Naive thymus-derived CD4-positive, alpha-beta T cell (primary cell): ENCODE measurements at regions of chr16 and their contacts with region 1.

Region 1: GRCh38 chr16:67935402-67936123 is 1.1 kb downstream of the PSMB10 start:
- DNase-seq: peak; percentile 71 to 95 (median 91)
- ATAC-seq: peak; percentile 96
- H3K4me3 ChIP-seq: peak overlapping the region; percentile 99
- H3K4me3 Mint-ChIP-seq: peak overlapping the region; percentile 89 to 100 (median 100)
- H3K27ac ChIP-seq: peak overlapping the region; percentile 77
- H3K27ac Mint-ChIP-seq: peak overlapping the region; percentile 87 to 99 (median 99)
- H3K4me1 ChIP-seq: peaks cover 21 to 32% of the 10 kb centered on the region in 2 donors
- H3K4me1 Mint-ChIP-seq: peaks cover 28 to 48% (median 35%) of the 10 kb centered on the region in 7 donors
- H3K27me3 ChIP-seq: no peaks in the 10 kb centered on the region
- H3K27me3 Mint-ChIP-seq: peaks cover 0 to 3% (median 0%) of the 10 kb centered on the region in 5 donors

Region 2: GRCh38 chr16:67480833-67481560 is 454.6 kb before region 1 on chr16 and contains the start of gene ATP6V0D1:
- CTCF ChIA-PET with region 1: no interaction called
- POLR2A ChIA-PET with region 1: no interaction called
- intact Hi-C with region 1: loop called (anchors 1 kb)
- DNase-seq: peak; percentile 97 to 100 (median 99)
- ATAC-seq: peak; percentile 94
- H3K4me3 ChIP-seq: peak within 1 kb of the TSS; percentile 92
- H3K4me3 Mint-ChIP-seq: peak within 1 kb of the TSS; percentile 95 to 100 (median 99)
- H3K27ac ChIP-seq: peak within 1 kb of the TSS; percentile 99
- H3K27ac Mint-ChIP-seq: peak within 1 kb of the TSS; percentile 95 to 99 (median 98)
- H3K4me1 ChIP-seq: peaks cover 15 to 25% of the 10 kb centered on the region in 2 donors
- H3K4me1 Mint-ChIP-seq: peaks cover 20 to 60% (median 37%) of the 10 kb centered on the region in 7 donors
- H3K27me3 ChIP-seq: no peaks in the 10 kb centered on the region
- H3K27me3 Mint-ChIP-seq: no peaks in the 10 kb centered on the region
- total RNA-seq, gene ATP6V0D1: 35.8 to 104 (median 54.7) TPM

Region 3: DNA sequence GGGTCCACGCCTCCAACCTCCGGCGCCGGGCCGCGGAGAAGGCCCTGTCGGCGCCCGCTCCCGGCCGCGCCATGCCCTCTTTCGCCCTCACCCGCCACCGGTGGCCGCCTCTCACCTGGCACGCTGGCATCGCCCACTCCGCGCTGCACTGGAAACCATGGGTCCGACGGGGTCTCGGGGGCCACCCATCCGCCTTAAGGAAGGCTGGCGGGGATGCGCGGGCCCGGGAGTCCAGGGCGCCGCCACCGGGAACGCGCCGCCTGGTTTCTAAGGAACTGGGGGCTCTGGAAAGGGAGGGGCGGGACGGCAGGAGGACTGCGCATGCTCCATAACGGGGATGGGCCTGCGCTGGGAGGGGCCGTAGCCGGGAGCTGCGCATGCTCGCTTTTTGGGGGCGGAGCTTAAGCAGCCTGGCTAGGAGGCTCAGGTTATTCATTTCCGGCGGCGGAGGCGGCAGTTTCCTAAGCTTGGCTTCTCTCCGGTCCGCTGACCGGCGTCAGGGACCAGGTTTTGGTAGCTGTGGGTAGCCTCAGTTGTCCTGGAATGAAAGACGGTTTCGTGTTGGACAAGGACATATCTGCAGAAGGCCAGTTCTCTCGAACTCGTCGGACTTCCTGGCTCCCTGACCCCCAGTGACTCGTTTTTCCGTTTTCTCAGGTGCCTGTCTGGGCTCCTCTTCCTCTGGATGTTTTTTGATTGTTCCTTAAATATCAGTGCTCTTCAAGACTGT is 216.3 kb before region 1 on chr16 and contains the start of gene GFOD2:
- CTCF ChIA-PET with region 1: no interaction called
- POLR2A ChIA-PET with region 1: no interaction called
- intact Hi-C with region 1: loop called in 1 of 2 experiments (anchors 1 kb)
- DNase-seq: peak; percentile 94 to 100 (median 96)
- ATAC-seq: peak; percentile 96
- H3K4me3 ChIP-seq: peak within 1 kb of the TSS; percentile 95
- H3K4me3 Mint-ChIP-seq: peak within 1 kb of the TSS; percentile 90 to 99 (median 94)
- H3K27ac ChIP-seq: peak within 1 kb of the TSS; percentile 88
- H3K27ac Mint-ChIP-seq: peak within 1 kb of the TSS; percentile 91 to 99 (median 98)
- H3K4me1 ChIP-seq: peaks cover 15 to 16% of the 10 kb centered on the region in 2 donors
- H3K4me1 Mint-ChIP-seq: peaks cover 19 to 51% (median 39%) of the 10 kb centered on the region in 7 donors
- H3K27me3 ChIP-seq: no peaks in the 10 kb centered on the region
- H3K27me3 Mint-ChIP-seq: no peaks in the 10 kb centered on the region
- total RNA-seq, gene GFOD2: 6.3 to 13.4 (median 11.4) TPM

Region 4: DNA sequence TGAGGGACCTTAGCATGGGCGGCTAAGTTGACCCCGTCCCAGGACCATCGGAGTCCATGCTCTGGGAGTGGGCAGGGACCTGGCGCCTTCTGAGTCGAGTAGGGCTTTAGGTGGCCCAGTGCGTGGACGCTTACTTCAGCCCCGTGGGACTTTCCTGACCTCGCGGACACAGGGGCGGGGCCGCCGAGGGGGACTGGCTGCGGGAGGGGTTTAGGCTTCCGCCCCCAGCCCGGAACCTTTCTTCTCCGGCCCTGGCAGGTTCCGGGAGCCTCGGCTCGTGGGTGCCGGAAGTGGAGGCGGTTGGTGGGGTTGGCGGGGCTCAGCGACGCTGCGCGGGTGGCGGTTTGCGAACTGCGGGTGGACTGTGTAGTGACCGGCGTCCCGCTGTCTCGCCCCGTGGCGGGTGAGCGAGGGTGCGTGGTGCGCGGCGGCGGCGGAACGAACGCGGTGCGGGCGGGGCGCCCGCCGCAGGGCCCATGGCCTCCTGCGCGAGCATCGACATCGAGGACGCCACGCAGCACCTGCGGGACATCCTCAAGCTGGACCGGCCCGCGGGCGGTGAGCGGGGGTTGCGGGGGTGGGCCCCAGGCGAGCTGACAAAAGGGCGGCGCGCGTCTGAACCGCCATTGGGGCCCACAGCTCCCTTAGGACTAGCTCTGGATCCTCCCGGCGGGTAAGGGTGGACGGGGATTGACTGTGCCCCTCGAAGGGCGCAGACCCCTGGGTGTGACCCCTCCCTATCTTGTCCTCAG is 62.6 kb before region 1 on chr16 and contains the start of gene EDC4:
- CTCF ChIA-PET with region 1: no interaction called
- POLR2A ChIA-PET with region 1: interaction called, 5 read pairs
- intact Hi-C with region 1: loop called (anchors 2 kb)
- DNase-seq: peak; percentile 75 to 96 (median 83)
- ATAC-seq: peak; percentile 96
- H3K4me3 ChIP-seq: peak within 1 kb of the TSS; percentile 88
- H3K4me3 Mint-ChIP-seq: peak within 1 kb of the TSS; percentile 88 to 96 (median 94)
- H3K27ac ChIP-seq: peak within 1 kb of the TSS; percentile 91
- H3K27ac Mint-ChIP-seq: peak within 1 kb of the TSS; percentile 90 to 97 (median 92)
- H3K4me1 ChIP-seq: peaks cover 19 to 30% of the 10 kb centered on the region in 2 donors
- H3K4me1 Mint-ChIP-seq: peaks cover 25 to 41% (median 36%) of the 10 kb centered on the region in 7 donors
- H3K27me3 ChIP-seq: no peaks in the 10 kb centered on the region
- H3K27me3 Mint-ChIP-seq: no peaks in the 10 kb centered on the region
- total RNA-seq, gene EDC4: 103 to 166 (median 122) TPM

Region 5: GRCh38 chr16:67979955-67980678 is 44.6 kb after region 1 on chr16 and contains the start of gene DPEP3:
- CTCF ChIA-PET with region 1: interaction called, 4 read pairs
- POLR2A ChIA-PET with region 1: interaction called, 29 read pairs
- intact Hi-C with region 1: loop called in 1 of 2 experiments (anchors 1 kb)
- DNase-seq: peak in 1 of 9 donors; percentile 15
- ATAC-seq: peak; percentile 35
- H3K4me3 ChIP-seq: no peak within 1 kb of the TSS
- H3K4me3 Mint-ChIP-seq: no peak within 1 kb of the TSS
- H3K27ac ChIP-seq: no peak within 1 kb of the TSS
- H3K27ac Mint-ChIP-seq: no peak within 1 kb of the TSS
- H3K4me1 ChIP-seq: peaks cover 9 to 23% of the 10 kb centered on the region in 2 donors
- H3K4me1 Mint-ChIP-seq: peaks cover 18 to 31% (median 26%) of the 10 kb centered on the region in 7 donors
- H3K27me3 ChIP-seq: no peaks in the 10 kb centered on the region
- H3K27me3 Mint-ChIP-seq: peaks cover 0 to 6% (median 0%) of the 10 kb centered on the region in 5 donors
- total RNA-seq, gene DPEP3: 0.10 to 2.3 (median 1.6) TPM

Region 6: GRCh38 chr16:68005786-68006286 is 70.3 kb after region 1 on chr16:
- CTCF ChIA-PET with region 1: no interaction called
- POLR2A ChIA-PET with region 1: interaction called, 29 read pairs
- intact Hi-C with region 1: no loop called
- DNase-seq: peak in 7 of 9 donors; percentile 37 to 87 (median 77)
- ATAC-seq: peak; percentile 99
- H3K4me3 ChIP-seq: peak overlapping the region; percentile 23
- H3K4me3 Mint-ChIP-seq: peak overlapping the region; percentile 40 to 85 (median 60)
- H3K27ac ChIP-seq: peak overlapping the region; percentile 50
- H3K27ac Mint-ChIP-seq: peak overlapping the region; percentile 91 to 100 (median 97)
- H3K4me1 ChIP-seq: peaks cover 28 to 45% of the 10 kb centered on the region in 2 donors
- H3K4me1 Mint-ChIP-seq: peaks cover 18 to 68% (median 44%) of the 10 kb centered on the region in 7 donors
- H3K27me3 ChIP-seq: no peaks in the 10 kb centered on the region
- H3K27me3 Mint-ChIP-seq: peaks cover 0 to 2% (median 0%) of the 10 kb centered on the region in 5 donors

Region 7: GRCh38 chr16:68085259-68086071 is 149.9 kb after region 1 on chr16 and contains the start of gene NFATC3:
- CTCF ChIA-PET with region 1: interaction called, 6 read pairs
- POLR2A ChIA-PET with region 1: interaction called, 18 read pairs
- intact Hi-C with region 1: loop called in 1 of 2 experiments (anchors 1 kb)
- DNase-seq: peak; percentile 96 to 99 (median 98)
- ATAC-seq: peak; percentile 92
- H3K4me3 ChIP-seq: peak within 1 kb of the TSS; percentile 88
- H3K4me3 Mint-ChIP-seq: peak within 1 kb of the TSS; percentile 82 to 97 (median 92)
- H3K27ac ChIP-seq: peak within 1 kb of the TSS; percentile 85
- H3K27ac Mint-ChIP-seq: peak within 1 kb of the TSS; percentile 71 to 97 (median 92)
- H3K4me1 ChIP-seq: peaks cover 63 to 66% of the 10 kb centered on the region in 2 donors
- H3K4me1 Mint-ChIP-seq: peaks cover 56 to 79% (median 70%) of the 10 kb centered on the region in 7 donors
- H3K27me3 ChIP-seq: no peaks in the 10 kb centered on the region
- H3K27me3 Mint-ChIP-seq: no peaks in the 10 kb centered on the region
- total RNA-seq, gene NFATC3: 120 to 151 (median 147) TPM

Region 8: DNA sequence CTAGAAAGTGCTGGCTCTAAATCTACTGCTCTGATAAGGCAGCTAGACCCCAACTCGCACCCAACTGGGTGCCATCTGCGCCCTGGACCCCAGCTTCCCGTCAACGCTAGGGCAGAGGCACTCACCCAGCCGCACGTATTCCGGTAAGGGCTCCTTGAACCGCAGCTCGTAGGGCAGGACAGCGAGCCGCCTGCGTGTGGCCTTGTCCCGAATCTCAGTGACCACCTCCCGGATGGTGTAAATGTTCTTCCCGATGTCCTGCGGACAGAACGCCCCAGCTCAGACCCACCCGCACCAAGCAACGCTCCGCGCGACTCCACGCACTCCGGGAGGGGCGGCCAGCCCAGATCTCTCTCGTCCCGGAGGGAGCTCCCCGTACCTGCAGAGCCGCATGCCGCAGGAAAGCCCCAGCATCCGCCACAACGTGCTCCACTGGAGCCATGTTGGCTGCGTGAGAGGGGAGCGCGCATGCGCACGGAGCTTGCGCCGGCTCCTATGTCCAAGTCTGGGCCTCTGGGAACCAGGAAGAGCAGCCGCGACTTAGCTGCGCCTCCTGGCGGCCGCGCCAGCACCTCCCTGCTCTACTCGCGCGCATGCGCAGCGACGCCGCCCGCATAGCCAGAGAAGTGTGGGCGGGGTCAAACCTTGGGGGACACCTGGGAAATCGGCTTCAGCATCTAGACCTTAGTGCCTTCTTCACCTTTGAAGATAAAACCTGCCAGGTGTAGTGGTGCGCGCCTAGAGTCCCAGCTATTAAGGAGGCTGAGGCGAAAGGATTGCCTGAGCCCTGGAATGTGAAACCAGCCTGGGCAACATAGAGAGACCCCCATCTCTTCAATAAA is 1819.1 kb after region 1 on chr16 and contains the start of gene NOB1:
- CTCF ChIA-PET with region 1: no interaction called
- POLR2A ChIA-PET with region 1: no interaction called
- intact Hi-C with region 1: no loop called
- DNase-seq: peak; percentile 96 to 98 (median 97)
- ATAC-seq: peak; percentile 97
- H3K4me3 ChIP-seq: peak within 1 kb of the TSS; percentile 91
- H3K4me3 Mint-ChIP-seq: peak within 1 kb of the TSS; percentile 98 to 100 (median 100)
- H3K27ac ChIP-seq: peak within 1 kb of the TSS; percentile 89
- H3K27ac Mint-ChIP-seq: peak within 1 kb of the TSS; percentile 92 to 100 (median 98)
- H3K4me1 ChIP-seq: peaks cover 13 to 17% of the 10 kb centered on the region in 2 donors
- H3K4me1 Mint-ChIP-seq: peaks cover 23 to 36% (median 26%) of the 10 kb centered on the region in 7 donors
- H3K27me3 ChIP-seq: no peaks in the 10 kb centered on the region
- H3K27me3 Mint-ChIP-seq: peaks cover 0 to 7% (median 0%) of the 10 kb centered on the region in 5 donors
- total RNA-seq, gene NOB1: 24.1 to 72.8 (median 45.0) TPM